Panc1 (cell line): ENCODE measurements at regions of chr18 and their contacts with region 1.

Region 1: GRCh38 chr18:49178736-49179135 is 228.0 kb upstream of the SMAD7 start:
- DNase-seq: no peak
- ATAC-seq: no peak
- H3K4me3 ChIP-seq: no peak overlapping the region
- H3K27ac ChIP-seq: no peak overlapping the region
- H3K4me1 ChIP-seq: no peaks in the 10 kb centered on the region; the same call in 1 of the 2 replicates
- H3K27me3 ChIP-seq: no peaks in the 10 kb centered on the region
- CTCF ChIP-seq: peak; percentile 58; the same call in 1 of the 2 replicates

Region 2: DNA sequence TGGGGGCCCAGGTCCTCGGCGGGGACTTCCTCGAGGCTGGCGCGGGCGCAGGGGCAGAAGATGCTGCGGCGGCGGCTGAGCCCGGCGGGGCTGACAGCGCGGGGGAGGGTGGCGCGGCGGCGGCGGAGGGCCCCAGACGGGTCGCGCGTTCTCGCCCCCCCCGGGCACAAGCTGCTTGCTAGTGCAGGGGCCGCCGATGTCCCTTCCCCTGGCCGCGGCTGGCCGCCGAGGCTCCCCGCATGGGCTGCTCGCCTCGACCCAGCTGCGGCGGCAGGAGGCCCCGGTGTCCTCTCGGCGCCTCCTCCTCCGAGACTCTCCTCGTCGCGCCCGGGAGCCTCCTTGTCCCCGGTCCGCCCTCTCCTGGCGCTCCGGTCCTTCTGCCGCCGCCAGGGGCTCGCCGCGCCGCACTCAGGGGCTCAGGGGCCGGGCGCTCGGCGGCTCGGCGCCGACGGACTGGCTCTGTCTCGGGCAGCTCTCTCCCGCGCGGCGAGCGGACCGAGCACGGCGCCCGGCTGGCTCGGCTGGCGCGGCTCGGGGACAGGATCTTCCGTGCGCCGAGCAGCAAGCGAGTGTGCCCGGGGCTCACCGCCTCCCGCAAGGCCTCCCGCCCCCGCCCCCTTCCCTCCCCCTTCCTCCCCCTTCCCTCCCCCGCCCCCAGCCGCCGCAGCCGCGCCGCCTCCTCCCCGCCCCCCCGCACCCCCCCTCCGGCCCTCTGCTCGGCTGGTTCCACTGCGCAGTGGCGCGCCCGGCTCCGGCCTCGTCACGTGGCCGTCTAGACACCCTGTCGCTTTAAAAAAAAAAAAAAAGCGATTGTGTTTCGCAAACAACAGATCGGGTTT is 227.1 kb before region 1 on chr18:
- CTCF ChIA-PET with region 1: no interaction called
- POLR2A ChIA-PET with region 1: no interaction called
- in situ Hi-C with region 1: no loop called
- intact Hi-C with region 1: loop called (anchors 5 kb)
- DNase-seq: no peak
- ATAC-seq: peak; percentile 70
- H3K4me3 ChIP-seq: peak overlapping the region; percentile 81 to 83
- H3K27ac ChIP-seq: peak overlapping the region; percentile 91
- H3K4me1 ChIP-seq: peaks cover 19% of the 10 kb centered on the region
- H3K27me3 ChIP-seq: no peaks in the 10 kb centered on the region
- CTCF ChIP-seq: peak; percentile 22; the same call in 1 of the 2 replicates